ENCODE measurements at regions of chr9 and their contacts with region 1.

Region 1: DNA sequence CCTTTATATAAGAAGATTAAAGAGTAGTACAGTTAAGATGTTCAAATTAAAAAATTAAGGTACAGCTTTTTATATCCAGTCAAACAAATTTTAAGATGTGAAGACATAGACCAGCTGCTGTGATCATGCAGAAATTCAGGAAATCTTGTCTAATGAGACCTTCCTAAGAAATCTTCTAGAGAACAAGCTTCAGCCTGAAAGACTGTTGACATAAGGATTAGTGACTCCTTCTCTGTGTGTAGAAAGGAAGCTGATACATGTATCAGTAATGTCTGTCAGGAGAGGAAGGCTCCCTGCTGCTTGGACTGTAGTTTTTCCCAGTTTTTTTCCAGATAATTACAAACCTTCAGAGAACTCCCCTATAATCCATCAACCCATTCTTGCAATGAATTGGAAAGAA is 75.8 kb upstream of the PCSK5 start:
- DNase-seq: no peak
- H3K4me3 ChIP-seq: no peak overlapping the region
- CTCF ChIP-seq: no peak

Region 2: GRCh38 chr9:75707191-75707590 is 107.5 kb before region 1 on chr9:
- in situ Hi-C with region 1: loop called (anchors 5 kb)
- DNase-seq: no peak
- H3K4me3 ChIP-seq: no peak overlapping the region
- CTCF ChIP-seq: no peak